Caco-2 (cell line): ENCODE measurements at regions of chr7 and their contacts with region 1.

Region 1: GRCh38 chr7:83347945-83348444 is 185.3 kb upstream of the PCLO start:
- DNase-seq: peak; percentile 61 to 81
- H3K4me3 ChIP-seq: no peak overlapping the region
- H3K4me3 Mint-ChIP-seq: no peak overlapping the region
- H3K27ac Mint-ChIP-seq: no peak overlapping the region
- H3K4me1 ChIP-seq: peaks cover 11% of the 10 kb centered on the region
- H3K4me1 Mint-ChIP-seq: no peaks in the 10 kb centered on the region
- H3K27me3 ChIP-seq: no peaks in the 10 kb centered on the region; the same call in 1 of the 2 replicates
- H3K27me3 Mint-ChIP-seq: peaks cover 3% of the 10 kb centered on the region
- CTCF ChIP-seq: no peak

Region 2: DNA sequence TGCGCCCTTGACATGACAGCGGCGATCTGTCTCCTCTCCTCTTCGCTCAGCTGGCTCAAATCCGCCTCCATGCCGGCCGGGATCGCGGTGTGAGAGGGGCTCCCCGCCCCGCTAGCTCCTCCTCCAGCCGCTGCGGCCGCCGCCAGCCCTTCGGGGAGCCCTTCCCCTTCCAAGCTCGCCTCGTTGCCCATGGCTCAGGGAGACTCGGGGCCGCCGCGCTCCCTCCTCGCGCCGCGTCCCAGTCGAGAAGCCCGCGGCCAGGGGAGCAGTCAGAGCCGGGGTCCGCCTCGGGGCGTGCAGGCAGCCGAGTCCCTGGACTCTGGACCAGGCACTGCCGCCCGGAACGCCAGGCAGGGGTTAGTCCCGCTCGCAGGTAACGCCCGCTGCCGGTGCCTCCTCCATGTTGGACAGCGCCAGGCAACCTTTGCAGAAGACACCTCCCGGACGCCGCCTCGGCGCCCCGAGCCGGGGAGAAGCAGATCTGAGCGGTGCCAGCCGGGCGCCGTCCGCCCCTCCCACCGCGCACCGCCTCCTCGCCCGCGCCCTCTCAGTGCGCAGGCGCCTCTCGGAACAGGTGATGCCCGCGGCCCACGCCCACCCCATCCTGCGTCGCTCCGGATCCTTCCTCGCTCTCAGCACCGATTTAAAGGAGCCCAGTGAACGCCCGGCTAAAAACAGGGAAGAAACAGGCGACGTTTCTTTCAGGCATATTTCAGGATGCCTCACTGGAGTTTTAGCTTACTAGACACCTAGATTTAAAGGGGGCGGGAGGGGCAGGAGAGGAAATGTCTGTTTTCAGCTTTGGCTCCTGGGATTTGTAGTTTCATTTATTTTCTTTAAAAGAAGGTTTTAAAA is 185.4 kb before region 1 on chr7 and contains the start of gene PCLO:
- CTCF ChIA-PET with region 1: no interaction called
- POLR2A ChIA-PET with region 1: no interaction called
- intact Hi-C with region 1: loop called (anchors 10 kb)
- DNase-seq: peak; percentile 92 to 93
- H3K4me3 ChIP-seq: peak within 1 kb of the TSS; percentile 91
- H3K4me3 Mint-ChIP-seq: peak within 1 kb of the TSS; percentile 87
- H3K27ac Mint-ChIP-seq: peak within 1 kb of the TSS; percentile 39
- H3K4me1 ChIP-seq: no peaks in the 10 kb centered on the region; the same call in 1 of the 2 replicates
- H3K4me1 Mint-ChIP-seq: no peaks in the 10 kb centered on the region
- H3K27me3 ChIP-seq: no peaks in the 10 kb centered on the region
- H3K27me3 Mint-ChIP-seq: no peaks in the 10 kb centered on the region
- CTCF ChIP-seq: no peak
- total RNA-seq, gene PCLO: 3.8 and 4.1 TPM in 2 replicates

Region 3: GRCh38 chr7:83289419-83289993 is 58.5 kb before region 1 on chr7:
- CTCF ChIA-PET with region 1: no interaction called
- POLR2A ChIA-PET with region 1: no interaction called
- intact Hi-C with region 1: loop called (anchors 10 kb)
- DNase-seq: no peak
- H3K4me3 ChIP-seq: no peak overlapping the region
- H3K4me3 Mint-ChIP-seq: no peak overlapping the region
- H3K27ac Mint-ChIP-seq: no peak overlapping the region
- H3K4me1 ChIP-seq: no peaks in the 10 kb centered on the region
- H3K4me1 Mint-ChIP-seq: no peaks in the 10 kb centered on the region
- H3K27me3 ChIP-seq: no peaks in the 10 kb centered on the region
- H3K27me3 Mint-ChIP-seq: peaks cover 3% of the 10 kb centered on the region
- CTCF ChIP-seq: no peak

Region 4: GRCh38 chr7:83325083-83325482 is 22.9 kb before region 1 on chr7:
- CTCF ChIA-PET with region 1: no interaction called
- POLR2A ChIA-PET with region 1: no interaction called
- intact Hi-C with region 1: loop called (anchors 2 kb)
- DNase-seq: no peak
- H3K4me3 ChIP-seq: no peak overlapping the region
- H3K4me3 Mint-ChIP-seq: no peak overlapping the region
- H3K27ac Mint-ChIP-seq: no peak overlapping the region
- H3K4me1 ChIP-seq: peaks cover 8% of the 10 kb centered on the region; the same call in 1 of the 2 replicates
- H3K4me1 Mint-ChIP-seq: no peaks in the 10 kb centered on the region
- H3K27me3 ChIP-seq: no peaks in the 10 kb centered on the region
- H3K27me3 Mint-ChIP-seq: no peaks in the 10 kb centered on the region
- CTCF ChIP-seq: no peak

Region 5: DNA sequence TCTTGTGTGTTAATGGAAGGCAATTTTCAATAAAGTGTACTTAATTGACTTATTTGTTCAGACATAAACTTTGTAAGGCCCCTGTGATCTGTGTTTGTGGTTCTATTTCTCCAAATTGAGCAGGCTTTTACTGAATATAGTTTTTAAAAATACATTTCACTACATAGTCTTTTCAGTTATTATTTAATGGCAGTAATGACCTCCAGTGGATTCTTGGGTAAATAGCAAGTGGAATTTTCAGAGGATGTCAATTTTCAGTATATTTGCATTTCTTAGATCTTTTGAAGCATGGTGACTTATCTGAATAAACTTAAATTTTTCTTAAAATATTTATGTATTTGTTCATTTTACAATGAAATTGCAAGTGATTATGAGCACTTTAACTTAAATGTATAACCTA is 17.8 kb after region 1 on chr7:
- CTCF ChIA-PET with region 1: no interaction called
- POLR2A ChIA-PET with region 1: no interaction called
- intact Hi-C with region 1: loop called (anchors 2 kb)
- DNase-seq: no peak
- H3K4me3 ChIP-seq: no peak overlapping the region
- H3K4me3 Mint-ChIP-seq: no peak overlapping the region
- H3K27ac Mint-ChIP-seq: no peak overlapping the region
- H3K4me1 ChIP-seq: no peaks in the 10 kb centered on the region
- H3K4me1 Mint-ChIP-seq: no peaks in the 10 kb centered on the region
- H3K27me3 ChIP-seq: no peaks in the 10 kb centered on the region
- H3K27me3 Mint-ChIP-seq: peaks cover 2% of the 10 kb centered on the region
- CTCF ChIP-seq: no peak